ENCODE measurements at regions of chrX and their contacts with region 1.

Region 1: DNA sequence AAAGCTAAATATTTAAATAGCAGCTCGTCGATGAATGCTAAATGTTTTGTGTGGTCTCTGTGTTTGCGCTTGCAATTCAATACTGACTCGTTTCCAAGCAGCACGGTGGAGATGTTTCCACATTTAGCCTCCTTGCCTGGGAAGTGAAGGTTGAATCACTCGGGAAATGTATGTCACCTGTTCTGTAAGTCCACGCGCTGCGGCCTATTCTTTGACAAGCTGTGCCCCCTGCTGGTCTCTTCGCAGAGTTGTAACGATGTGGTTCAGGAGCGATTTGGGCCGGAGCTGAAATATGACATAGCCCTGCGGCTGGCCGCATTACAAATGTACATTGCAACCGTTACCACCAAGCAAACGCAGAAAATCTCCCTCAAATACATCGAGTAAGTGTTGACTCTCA is 89.6 kb upstream of the PRPS2 start:
- DNase-seq: no peak
- ATAC-seq: peak; percentile 58
- H3K4me3 Mint-ChIP-seq: no peak overlapping the region
- H3K27ac Mint-ChIP-seq: no peak overlapping the region
- H3K4me1 Mint-ChIP-seq: peaks cover 39% of the 10 kb centered on the region
- H3K27me3 Mint-ChIP-seq: peaks cover 1% of the 10 kb centered on the region
- CTCF ChIP-seq: no peak

Region 2: DNA sequence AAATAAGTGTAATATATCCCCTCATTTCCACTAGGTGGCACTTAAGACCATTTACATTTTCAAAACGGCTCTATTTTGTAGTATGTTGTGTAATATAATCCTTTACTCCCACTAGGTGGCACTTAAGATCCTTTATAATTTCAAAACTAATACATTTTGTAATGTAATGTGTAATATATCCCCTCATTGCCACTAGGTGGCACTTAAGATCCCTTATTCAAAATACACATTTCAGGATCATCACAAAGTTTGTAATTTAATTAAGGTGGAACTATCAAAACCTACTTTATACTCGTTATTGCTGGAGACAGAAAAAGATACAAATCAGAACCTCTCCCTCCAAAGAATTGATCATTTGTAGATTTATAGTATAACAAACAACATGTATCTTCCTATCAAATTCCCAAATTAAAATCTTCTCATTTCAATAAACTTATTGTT is 1168.4 kb before region 1 on chrX:
- CTCF ChIA-PET with region 1: no interaction called
- POLR2A ChIA-PET with region 1: no interaction called
- intact Hi-C with region 1: loop called (anchors 1 kb)
- DNase-seq: no peak
- ATAC-seq: peak; percentile 99
- H3K4me3 Mint-ChIP-seq: no peak overlapping the region
- H3K27ac Mint-ChIP-seq: no peak overlapping the region
- H3K4me1 Mint-ChIP-seq: peaks cover 3% of the 10 kb centered on the region
- H3K27me3 Mint-ChIP-seq: no peaks in the 10 kb centered on the region
- CTCF ChIP-seq: peak; percentile 44

Region 3: GRCh38 chrX:11787564-11787963 is 914.1 kb before region 1 on chrX:
- CTCF ChIA-PET with region 1: no interaction called
- POLR2A ChIA-PET with region 1: no interaction called
- intact Hi-C with region 1: loop called (anchors 2 kb)
- DNase-seq: peak; percentile 46
- ATAC-seq: peak; percentile 65
- H3K4me3 Mint-ChIP-seq: peak overlapping the region; percentile 53
- H3K27ac Mint-ChIP-seq: no peak overlapping the region
- H3K4me1 Mint-ChIP-seq: peaks cover 27% of the 10 kb centered on the region
- H3K27me3 Mint-ChIP-seq: no peaks in the 10 kb centered on the region
- CTCF ChIP-seq: no peak

Region 4: GRCh38 chrX:12080265-12080664 is 621.4 kb before region 1 on chrX:
- CTCF ChIA-PET with region 1: interaction called, 27 read pairs
- POLR2A ChIA-PET with region 1: no interaction called
- intact Hi-C with region 1: loop called (anchors 1 kb)
- DNase-seq: no peak
- ATAC-seq: no peak
- H3K4me3 Mint-ChIP-seq: no peak overlapping the region
- H3K27ac Mint-ChIP-seq: no peak overlapping the region
- H3K4me1 Mint-ChIP-seq: no peaks in the 10 kb centered on the region
- H3K27me3 Mint-ChIP-seq: peaks cover 2% of the 10 kb centered on the region
- CTCF ChIP-seq: no peak

Region 5: GRCh38 chrX:12771445-12772069 is 69.9 kb after region 1 on chrX:
- CTCF ChIA-PET with region 1: interaction called, 12 read pairs
- POLR2A ChIA-PET with region 1: no interaction called
- intact Hi-C with region 1: loop called (anchors 1 kb)
- DNase-seq: peak; percentile 53
- ATAC-seq: peak; percentile 100
- H3K4me3 Mint-ChIP-seq: no peak overlapping the region
- H3K27ac Mint-ChIP-seq: no peak overlapping the region
- H3K4me1 Mint-ChIP-seq: peaks cover 9% of the 10 kb centered on the region
- H3K27me3 Mint-ChIP-seq: no peaks in the 10 kb centered on the region
- CTCF ChIP-seq: no peak

Region 6: GRCh38 chrX:12901486-12901885 is 199.9 kb after region 1 on chrX:
- CTCF ChIA-PET with region 1: interaction called, 3 read pairs
- POLR2A ChIA-PET with region 1: no interaction called
- intact Hi-C with region 1: loop called (anchors 1 kb)
- DNase-seq: peak; percentile 41
- ATAC-seq: peak; percentile 71
- H3K4me3 Mint-ChIP-seq: no peak overlapping the region
- H3K27ac Mint-ChIP-seq: peak overlapping the region; percentile 60
- H3K4me1 Mint-ChIP-seq: peaks cover 4% of the 10 kb centered on the region
- H3K27me3 Mint-ChIP-seq: no peaks in the 10 kb centered on the region
- CTCF ChIP-seq: no peak

Measured in activated B cell treated with CpG ODN at 0.5 μM for 24 hours (primary cell).